ENCODE measurements at regions of chr12 and their contacts with region 1.

Region 1: DNA sequence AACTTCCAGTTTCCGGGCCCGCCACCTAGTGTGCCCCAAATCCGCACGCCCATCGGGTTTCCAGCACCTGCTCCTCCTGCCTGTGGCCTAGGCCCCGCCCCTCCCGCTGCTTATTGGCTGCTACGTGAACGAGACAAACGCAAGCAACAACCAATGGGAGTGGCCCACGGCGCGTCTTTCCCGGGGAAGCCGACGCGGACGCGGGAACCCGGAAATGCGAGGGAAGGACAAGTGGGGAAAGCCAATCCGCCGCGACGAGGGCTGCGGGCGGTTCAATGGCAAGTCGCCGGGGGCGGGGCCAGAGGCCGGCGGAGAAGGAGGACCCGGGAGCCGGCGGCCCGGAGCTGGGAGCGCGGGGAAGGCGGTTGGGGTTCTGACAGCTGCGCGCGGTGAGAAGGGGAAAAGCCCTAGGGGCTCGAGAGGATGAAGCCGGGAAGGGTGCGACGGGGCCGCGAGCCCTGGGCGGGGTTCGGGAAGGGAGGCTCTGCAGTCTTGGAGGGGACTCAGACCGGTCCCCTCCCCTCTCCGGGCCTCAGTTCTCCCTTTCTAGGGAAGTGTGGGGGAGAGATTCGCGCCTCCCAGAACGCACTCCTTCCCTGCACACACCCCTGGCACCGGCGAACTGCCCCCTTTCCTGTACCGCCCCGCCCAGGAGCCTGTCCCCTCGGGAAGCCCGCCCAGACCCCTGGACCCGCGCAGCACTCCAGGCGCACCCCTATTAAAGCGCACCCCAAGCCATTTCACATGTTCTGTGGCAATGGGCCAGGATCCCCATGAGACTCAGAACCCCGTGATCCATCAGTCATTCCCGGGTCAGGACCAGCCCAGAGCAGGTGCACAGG is at the start of gene FICD:
- DNase-seq: peak; percentile 97 to 100 (median 99)
- ATAC-seq: peak; percentile 95
- H3K4me3 ChIP-seq: peak within 1 kb of the TSS; percentile 90 to 99
- H3K4me3 Mint-ChIP-seq: peak within 1 kb of the TSS; percentile 92
- H3K27ac ChIP-seq: peak within 1 kb of the TSS; percentile 74 to 86
- H3K27ac Mint-ChIP-seq: peak within 1 kb of the TSS; percentile 94
- H3K4me1 ChIP-seq: peaks cover 20% of the 10 kb centered on the region
- H3K4me1 Mint-ChIP-seq: peaks cover 30% of the 10 kb centered on the region
- H3K27me3 ChIP-seq: no peaks in the 10 kb centered on the region
- H3K27me3 Mint-ChIP-seq: no peaks in the 10 kb centered on the region
- CTCF ChIP-seq: no peak
- total RNA-seq, gene FICD: 4.2 to 4.3 TPM

Region 2: DNA sequence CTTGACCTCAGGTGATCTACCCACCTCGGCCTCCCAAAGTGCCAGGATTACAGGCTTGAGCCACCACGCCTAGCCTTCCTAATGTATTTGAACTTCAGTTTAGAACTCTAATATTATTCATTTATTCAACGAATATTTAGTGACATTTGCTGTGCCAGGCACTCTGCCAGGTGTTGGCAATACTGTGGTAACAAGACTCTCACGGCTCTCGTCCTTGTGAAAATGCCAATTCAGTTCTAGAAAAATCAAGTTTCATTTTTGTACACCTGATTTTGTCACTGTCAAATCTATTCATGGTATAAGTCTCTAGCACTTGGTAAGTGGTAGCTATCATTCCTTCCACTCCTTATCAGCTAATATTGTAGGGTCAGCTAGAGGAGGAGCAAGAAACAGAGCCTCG is 835.9 kb before region 1 on chr12:
- CTCF ChIA-PET with region 1: interaction called, 5 read pairs
- POLR2A ChIA-PET with region 1: no interaction called
- intact Hi-C with region 1: loop called (anchors 2 kb)
- DNase-seq: no peak
- ATAC-seq: no peak
- H3K4me3 ChIP-seq: no peak overlapping the region
- H3K4me3 Mint-ChIP-seq: no peak overlapping the region
- H3K27ac ChIP-seq: no peak overlapping the region
- H3K27ac Mint-ChIP-seq: no peak overlapping the region
- H3K4me1 ChIP-seq: no peaks in the 10 kb centered on the region
- H3K4me1 Mint-ChIP-seq: peaks cover 1% of the 10 kb centered on the region
- H3K27me3 ChIP-seq: no peaks in the 10 kb centered on the region
- H3K27me3 Mint-ChIP-seq: peaks cover 14% of the 10 kb centered on the region
- CTCF ChIP-seq: no peak

Region 3: DNA sequence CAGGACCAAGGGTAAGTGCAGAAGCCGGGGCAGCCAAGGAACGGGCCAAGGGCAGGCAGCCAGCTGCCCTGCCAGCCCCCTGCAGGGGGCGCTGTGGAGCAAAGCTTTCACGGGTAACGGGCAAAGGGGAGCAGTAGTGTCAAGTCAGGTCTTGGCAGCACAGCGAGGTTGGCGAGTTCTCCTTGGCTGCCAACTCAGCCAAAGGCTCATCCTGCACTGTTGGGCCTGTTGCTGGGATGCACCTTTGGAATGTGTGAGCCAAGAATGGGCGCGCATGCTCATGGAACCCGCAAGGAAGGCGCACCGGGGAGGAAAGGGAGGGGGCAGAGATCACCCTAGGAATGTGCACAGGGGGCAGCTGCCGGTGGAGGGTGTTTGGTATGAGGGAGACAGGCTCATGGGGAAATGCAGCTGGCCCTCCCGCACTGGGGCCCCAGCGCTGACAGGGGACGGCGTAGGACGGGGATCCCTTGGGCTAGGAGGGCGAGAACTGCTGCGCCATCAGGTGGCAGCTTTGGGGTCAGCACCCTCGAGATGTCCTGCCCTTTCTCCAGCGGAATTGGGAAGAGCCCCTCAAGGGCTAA is 602.7 kb before region 1 on chr12:
- CTCF ChIA-PET with region 1: interaction called, 7 read pairs
- POLR2A ChIA-PET with region 1: no interaction called
- intact Hi-C with region 1: loop called in 1 of 2 experiments (anchors 10 kb)
- DNase-seq: peak; percentile 8 to 59 (median 54)
- ATAC-seq: peak; percentile 63
- H3K4me3 ChIP-seq: peak overlapping the region; percentile 19 to 45
- H3K4me3 Mint-ChIP-seq: peak overlapping the region; percentile 73
- H3K27ac ChIP-seq: no peak overlapping the region
- H3K27ac Mint-ChIP-seq: no peak overlapping the region
- H3K4me1 ChIP-seq: no peaks in the 10 kb centered on the region
- H3K4me1 Mint-ChIP-seq: peaks cover 7% of the 10 kb centered on the region
- H3K27me3 ChIP-seq: peaks cover 0 to 6% of the 10 kb centered on the region in 2 experiments
- H3K27me3 Mint-ChIP-seq: peaks cover 55% of the 10 kb centered on the region
- CTCF ChIP-seq: peak; percentile 45

Region 4: GRCh38 chr12:108099073-108099472 is 416.1 kb before region 1 on chr12:
- CTCF ChIA-PET with region 1: no interaction called
- POLR2A ChIA-PET with region 1: no interaction called
- intact Hi-C with region 1: loop called in 1 of 2 experiments (anchors 5 kb)
- DNase-seq: peak in 2 of 9 experiments; percentile 13 to 16
- ATAC-seq: no peak
- H3K4me3 ChIP-seq: no peak overlapping the region
- H3K4me3 Mint-ChIP-seq: no peak overlapping the region
- H3K27ac ChIP-seq: no peak overlapping the region
- H3K27ac Mint-ChIP-seq: no peak overlapping the region
- H3K4me1 ChIP-seq: no peaks in the 10 kb centered on the region
- H3K4me1 Mint-ChIP-seq: no peaks in the 10 kb centered on the region
- H3K27me3 ChIP-seq: no peaks in the 10 kb centered on the region
- H3K27me3 Mint-ChIP-seq: peaks cover 12% of the 10 kb centered on the region
- CTCF ChIP-seq: no peak

Region 5: DNA sequence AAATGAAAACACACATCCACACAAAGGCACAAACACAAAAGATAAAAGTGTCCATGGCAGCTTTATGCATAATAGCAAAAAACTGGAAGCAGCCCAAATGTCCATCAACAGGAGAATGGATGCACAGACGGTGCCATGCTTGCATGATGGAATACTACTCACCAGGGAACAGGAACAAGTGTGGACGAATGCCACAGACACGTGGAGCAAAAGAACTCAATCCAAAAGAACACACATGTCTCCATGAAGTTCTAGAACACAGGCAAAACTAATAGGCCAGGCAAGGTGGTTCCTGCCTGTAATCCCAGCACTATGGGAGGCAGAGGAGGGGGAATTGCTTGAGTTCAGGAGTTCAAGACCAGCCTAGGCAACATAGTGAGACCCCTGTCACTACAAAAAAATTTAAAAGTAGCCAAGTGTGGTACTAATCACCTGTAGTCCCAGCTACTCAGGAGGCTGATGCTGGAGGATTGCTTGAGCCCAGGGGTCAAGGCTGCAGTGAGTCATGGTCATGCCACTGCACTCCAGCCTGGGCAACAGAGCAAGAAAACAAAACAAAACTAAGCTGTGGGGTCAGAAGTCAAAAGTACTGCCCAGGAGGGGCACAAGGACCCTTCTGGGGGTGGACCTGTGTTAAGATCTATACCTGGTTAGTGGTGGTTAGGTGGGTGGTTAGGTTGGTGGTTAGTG is 90.0 kb after region 1 on chr12:
- CTCF ChIA-PET with region 1: no interaction called
- POLR2A ChIA-PET with region 1: no interaction called
- intact Hi-C with region 1: no loop called
- DNase-seq: no peak
- ATAC-seq: no peak
- H3K4me3 ChIP-seq: no peak overlapping the region
- H3K4me3 Mint-ChIP-seq: no peak overlapping the region
- H3K27ac ChIP-seq: no peak overlapping the region
- H3K27ac Mint-ChIP-seq: no peak overlapping the region
- H3K4me1 ChIP-seq: no peaks in the 10 kb centered on the region
- H3K4me1 Mint-ChIP-seq: no peaks in the 10 kb centered on the region
- H3K27me3 ChIP-seq: no peaks in the 10 kb centered on the region
- H3K27me3 Mint-ChIP-seq: no peaks in the 10 kb centered on the region
- CTCF ChIP-seq: no peak

Region 6: GRCh38 chr12:108618079-108618952 is 103.1 kb after region 1 on chr12:
- CTCF ChIA-PET with region 1: interaction called, 5 read pairs
- POLR2A ChIA-PET with region 1: no interaction called
- intact Hi-C with region 1: loop called (anchors 1 kb)
- DNase-seq: peak; percentile 53 to 87 (median 78)
- ATAC-seq: peak; percentile 35
- H3K4me3 ChIP-seq: no peak overlapping the region
- H3K4me3 Mint-ChIP-seq: no peak overlapping the region
- H3K27ac ChIP-seq: peak overlapping the region in 1 of 2 experiments; percentile 71
- H3K27ac Mint-ChIP-seq: peak overlapping the region; percentile 95
- H3K4me1 ChIP-seq: peaks cover 45% of the 10 kb centered on the region
- H3K4me1 Mint-ChIP-seq: peaks cover 61% of the 10 kb centered on the region
- H3K27me3 ChIP-seq: no peaks in the 10 kb centered on the region
- H3K27me3 Mint-ChIP-seq: no peaks in the 10 kb centered on the region
- CTCF ChIP-seq: peak; percentile 96

Region 7: GRCh38 chr12:108950991-108951739 is 436.0 kb after region 1 on chr12:
- CTCF ChIA-PET with region 1: no interaction called
- POLR2A ChIA-PET with region 1: no interaction called
- intact Hi-C with region 1: loop called in 1 of 2 experiments (anchors 5 kb)
- DNase-seq: peak; percentile 43 to 83 (median 69)
- ATAC-seq: peak; percentile 91
- H3K4me3 ChIP-seq: no peak overlapping the region
- H3K4me3 Mint-ChIP-seq: no peak overlapping the region
- H3K27ac ChIP-seq: no peak overlapping the region
- H3K27ac Mint-ChIP-seq: no peak overlapping the region
- H3K4me1 ChIP-seq: no peaks in the 10 kb centered on the region
- H3K4me1 Mint-ChIP-seq: peaks cover 6% of the 10 kb centered on the region
- H3K27me3 ChIP-seq: no peaks in the 10 kb centered on the region
- H3K27me3 Mint-ChIP-seq: peaks cover 16% of the 10 kb centered on the region
- CTCF ChIP-seq: peak; percentile 86

Region 8: GRCh38 chr12:109713187-109713984 is 1198.2 kb after region 1 on chr12 and contains the start of gene FAM222A:
- CTCF ChIA-PET with region 1: no interaction called
- POLR2A ChIA-PET with region 1: no interaction called
- intact Hi-C with region 1: loop called in 1 of 2 experiments (anchors 10 kb)
- DNase-seq: peak; percentile 95 to 99 (median 98)
- ATAC-seq: peak; percentile 88
- H3K4me3 ChIP-seq: peak within 1 kb of the TSS; percentile 54 to 55
- H3K4me3 Mint-ChIP-seq: peak within 1 kb of the TSS; percentile 81
- H3K27ac ChIP-seq: no peak within 1 kb of the TSS
- H3K27ac Mint-ChIP-seq: no peak within 1 kb of the TSS
- H3K4me1 ChIP-seq: peaks cover 11% of the 10 kb centered on the region
- H3K4me1 Mint-ChIP-seq: no peaks in the 10 kb centered on the region
- H3K27me3 ChIP-seq: peaks cover 0 to 3% of the 10 kb centered on the region in 2 experiments
- H3K27me3 Mint-ChIP-seq: peaks cover 40% of the 10 kb centered on the region
- CTCF ChIP-seq: no peak
- total RNA-seq, gene FAM222A: 4.4 to 5.3 TPM